ENCODE measurements at regions of chr2 and their contacts with region 1.

Region 1: GRCh38 chr2:98731041-98731893 is at the start of gene MGAT4A:
- DNase-seq: peak; percentile 79 to 88
- ATAC-seq: peak; percentile 82 to 96 (median 94)
- H3K4me3 ChIP-seq: peak within 1 kb of the TSS; percentile 74 to 89 (median 86)
- H3K27ac ChIP-seq: peak within 1 kb of the TSS; percentile 80 to 98 (median 95)
- H3K4me1 ChIP-seq: peaks cover 4 to 74% (median 34%) of the 10 kb centered on the region in 9 donors
- H3K27me3 ChIP-seq: no peaks in the 10 kb centered on the region
- CTCF ChIP-seq: no peak
- total RNA-seq, gene MGAT4A: 17.7 to 33.0 (median 18.7) TPM

Region 2: DNA sequence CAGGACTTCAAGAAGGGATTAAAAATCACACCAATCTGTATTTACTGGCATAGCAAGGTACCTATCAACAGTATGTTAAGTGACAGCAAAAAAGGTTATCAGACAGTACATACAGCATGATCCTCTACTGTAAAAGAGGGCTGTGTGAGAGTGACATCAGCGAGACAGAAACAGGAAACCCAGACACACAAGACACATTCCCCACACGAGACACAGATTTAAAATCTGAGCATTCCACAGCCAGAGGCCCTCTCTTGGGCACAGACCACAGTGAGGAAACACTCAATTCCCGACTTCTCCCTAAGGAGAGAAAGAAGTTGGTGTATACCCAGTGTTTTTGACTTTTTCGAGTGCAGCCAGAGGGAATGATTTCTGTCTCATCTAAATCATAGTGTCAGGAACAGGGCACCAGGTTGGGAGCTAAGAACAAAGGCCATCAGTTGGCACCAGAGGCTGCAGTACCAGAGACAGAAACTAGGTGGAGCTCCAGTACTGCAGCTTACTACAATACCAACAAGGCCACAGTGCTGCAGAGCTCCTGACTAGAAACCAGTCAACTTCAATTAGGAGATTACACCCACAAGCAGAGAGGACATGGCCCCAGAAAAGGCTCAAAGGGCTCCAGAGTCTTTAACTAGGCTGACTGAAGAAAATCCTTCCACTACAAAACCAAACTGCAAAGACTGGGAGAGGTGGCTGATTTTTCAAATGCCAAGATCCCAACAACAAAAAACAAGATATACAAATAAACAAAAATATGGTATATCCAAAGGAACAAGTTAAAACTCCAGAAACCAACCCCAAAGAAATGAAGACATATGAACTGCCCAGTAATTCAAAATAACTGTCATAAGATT is 81.9 kb before region 1 on chr2:
- intact Hi-C with region 1: loop called in 6 of 10 experiments (anchors 5 to 10 kb)
- DNase-seq: peak; percentile 25 to 85
- ATAC-seq: peak; percentile 86 to 96 (median 92)
- H3K4me3 ChIP-seq: no peak overlapping the region
- H3K27ac ChIP-seq: peak overlapping the region in 1 of 10 donors; percentile 18
- H3K4me1 ChIP-seq: peaks cover 0 to 22% (median 0%) of the 10 kb centered on the region in 9 donors
- H3K27me3 ChIP-seq: no peaks in the 10 kb centered on the region
- CTCF ChIP-seq: peak; percentile 97 to 99 (median 99)

Region 3: DNA sequence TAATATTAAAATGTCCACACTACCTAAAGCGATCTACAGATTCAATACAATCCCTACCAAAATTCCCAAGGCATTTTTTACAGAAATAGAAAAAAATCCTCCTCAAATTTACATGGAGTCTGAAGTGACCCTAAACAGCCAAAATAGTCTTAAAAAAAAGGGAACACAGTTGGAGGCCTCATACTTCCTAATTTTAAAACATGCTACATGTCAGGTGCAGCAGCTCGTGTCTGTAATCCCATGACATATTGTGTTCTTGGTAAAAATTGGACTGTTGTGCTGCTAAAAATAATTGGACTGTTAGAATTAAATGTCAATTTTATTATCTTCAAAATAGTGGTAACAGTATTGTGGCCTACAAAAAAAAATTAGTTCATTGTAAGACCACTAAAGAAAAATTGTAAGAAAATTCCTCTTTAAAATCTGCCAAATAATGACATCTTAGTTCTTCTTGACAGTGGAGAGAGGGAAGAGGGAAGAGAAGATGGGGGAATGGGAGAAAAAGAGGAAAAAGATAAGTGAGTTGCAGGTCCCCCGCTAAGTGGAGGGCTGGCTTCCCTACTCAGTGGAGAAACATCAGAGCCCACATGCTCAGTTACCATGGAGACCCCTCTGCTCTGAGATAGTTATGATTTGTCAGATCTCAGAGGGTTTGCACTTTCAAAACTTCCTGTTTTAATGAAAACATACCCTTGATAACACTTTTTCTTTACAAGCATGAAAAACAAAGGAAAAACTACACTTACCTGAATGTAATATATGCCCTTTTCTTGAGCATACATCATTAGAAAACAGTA is 76.4 kb before region 1 on chr2:
- intact Hi-C with region 1: loop called in 6 of 10 experiments (anchors 5 to 10 kb)
- DNase-seq: no peak
- ATAC-seq: no peak
- H3K4me3 ChIP-seq: no peak overlapping the region
- H3K27ac ChIP-seq: peak overlapping the region in 1 of 10 donors; percentile 32
- H3K4me1 ChIP-seq: peaks cover 0 to 40% (median 0%) of the 10 kb centered on the region in 9 donors
- H3K27me3 ChIP-seq: no peaks in the 10 kb centered on the region
- CTCF ChIP-seq: no peak

Region 4: GRCh38 chr2:98805412-98806171 is 74.3 kb after region 1 on chr2:
- intact Hi-C with region 1: loop called in 1 of 10 experiments (anchors 10 kb)
- DNase-seq: peak in 1 of 2 donors; percentile 26
- ATAC-seq: peak; percentile 13 to 73 (median 60)
- H3K4me3 ChIP-seq: no peak overlapping the region
- H3K27ac ChIP-seq: peak overlapping the region in 9 of 10 donors; percentile 35 to 85 (median 57)
- H3K4me1 ChIP-seq: peaks cover 9 to 42% (median 23%) of the 10 kb centered on the region in 9 donors
- H3K27me3 ChIP-seq: no peaks in the 10 kb centered on the region
- CTCF ChIP-seq: no peak

Region 5: GRCh38 chr2:98822301-98823164 is 91.3 kb after region 1 on chr2:
- intact Hi-C with region 1: loop called in 4 of 10 experiments (anchors 1 to 5 kb)
- DNase-seq: peak; percentile 71 to 75
- ATAC-seq: peak; percentile 78 to 88 (median 82)
- H3K4me3 ChIP-seq: peak overlapping the region; percentile 24 to 64 (median 57)
- H3K27ac ChIP-seq: peak overlapping the region; percentile 83 to 97 (median 94)
- H3K4me1 ChIP-seq: peaks cover 6 to 75% (median 53%) of the 10 kb centered on the region in 9 donors
- H3K27me3 ChIP-seq: peaks cover 0 to 17% (median 4%) of the 10 kb centered on the region in 7 donors
- CTCF ChIP-seq: peak; percentile 6 to 60 (median 37)

Region 6: DNA sequence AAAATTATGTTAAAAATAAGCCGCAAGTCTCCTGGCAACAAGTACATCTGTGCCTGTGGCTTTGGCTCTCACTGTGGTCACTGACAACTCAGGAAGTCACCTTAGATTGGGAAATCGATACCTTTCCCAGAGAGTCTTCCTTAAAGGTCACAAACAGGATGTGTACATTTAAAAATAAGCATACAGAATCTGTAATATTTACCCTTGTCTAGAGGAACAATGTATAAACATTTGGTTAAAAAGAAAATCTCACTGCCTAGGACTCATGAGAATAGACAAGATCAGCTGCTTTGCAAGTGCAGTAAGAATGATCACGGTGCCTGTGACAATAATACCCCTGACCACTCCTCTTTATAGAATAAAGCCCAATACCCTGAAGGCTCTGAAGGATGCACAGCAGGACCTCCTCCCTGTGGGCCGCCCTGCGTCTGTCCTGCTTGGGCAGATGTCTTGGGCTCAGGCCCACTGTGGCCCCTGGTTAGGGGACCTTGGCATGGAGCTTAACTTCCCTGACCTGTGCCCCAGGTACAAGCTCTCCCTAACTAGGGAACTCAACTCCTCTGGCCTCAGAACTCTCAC is 97.6 kb after region 1 on chr2:
- intact Hi-C with region 1: loop called in 4 of 10 experiments (anchors 5 to 10 kb)
- DNase-seq: no peak
- ATAC-seq: no peak
- H3K4me3 ChIP-seq: no peak overlapping the region
- H3K27ac ChIP-seq: peak overlapping the region in 3 of 10 donors; percentile 3 to 47 (median 29)
- H3K4me1 ChIP-seq: peaks cover 0 to 58% (median 31%) of the 10 kb centered on the region in 9 donors
- H3K27me3 ChIP-seq: no peaks in the 10 kb centered on the region
- CTCF ChIP-seq: no peak

Region 7: GRCh38 chr2:98835831-98836385 is 104.6 kb after region 1 on chr2:
- intact Hi-C with region 1: loop called in 2 of 10 experiments (anchors 5 to 10 kb)
- DNase-seq: no peak
- ATAC-seq: no peak
- H3K4me3 ChIP-seq: no peak overlapping the region
- H3K27ac ChIP-seq: peak overlapping the region in 1 of 10 donors; percentile 48
- H3K4me1 ChIP-seq: peaks cover 0 to 23% (median 15%) of the 10 kb centered on the region in 9 donors
- H3K27me3 ChIP-seq: no peaks in the 10 kb centered on the region
- CTCF ChIP-seq: no peak